Endothelial cell of umbilical vein (primary cell): ENCODE measurements at regions of chr12 and their contacts with region 1.

Region 1: DNA sequence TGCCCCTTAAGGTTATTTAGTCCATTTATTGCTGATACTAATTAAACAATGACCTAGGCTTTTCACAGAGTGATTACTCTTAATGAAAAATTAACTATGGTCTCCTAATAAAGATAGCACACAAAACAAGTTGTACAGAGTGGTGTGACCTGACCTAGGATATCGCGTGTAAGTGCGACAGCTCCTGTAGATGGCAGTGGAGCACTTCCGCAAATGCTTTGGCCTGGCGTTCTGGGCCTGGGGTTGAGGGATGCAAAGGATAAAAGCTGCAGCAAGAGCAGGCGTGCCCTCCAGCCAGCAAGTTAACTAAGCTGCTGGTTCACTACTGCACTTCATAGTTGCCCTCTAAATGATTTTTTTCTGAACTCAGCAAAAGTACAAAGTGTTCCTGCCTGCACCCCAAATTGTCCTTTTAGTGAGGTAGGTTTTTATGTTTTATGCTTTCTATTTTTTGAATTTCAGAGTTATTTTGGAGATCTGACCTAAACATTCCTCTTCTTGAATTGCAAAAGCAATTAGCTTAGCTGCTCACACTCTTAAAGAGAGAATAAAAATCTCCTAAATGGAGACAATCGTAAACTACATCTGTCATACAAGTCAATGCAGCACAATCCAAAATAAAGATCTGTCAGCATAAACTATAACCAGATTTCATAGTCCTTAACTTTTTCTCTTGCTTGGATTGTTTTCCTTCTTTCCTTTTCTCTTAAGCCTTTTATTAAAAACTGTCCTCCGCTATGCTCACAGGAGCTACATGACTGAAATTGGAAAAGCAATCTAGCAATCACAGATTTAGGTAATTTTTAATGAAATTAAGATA is 379.6 kb downstream of the LRIG3 start:
- DNase-seq: peak; percentile 89
- H3K4me3 ChIP-seq: no peak overlapping the region
- H3K27ac ChIP-seq: no peak overlapping the region
- H3K4me1 ChIP-seq: peaks cover 10% of the 10 kb centered on the region
- H3K27me3 ChIP-seq: no peaks in the 10 kb centered on the region
- CTCF ChIP-seq: peak; percentile 76 to 79
- POLR2A ChIP-seq: no peak

Region 2: DNA sequence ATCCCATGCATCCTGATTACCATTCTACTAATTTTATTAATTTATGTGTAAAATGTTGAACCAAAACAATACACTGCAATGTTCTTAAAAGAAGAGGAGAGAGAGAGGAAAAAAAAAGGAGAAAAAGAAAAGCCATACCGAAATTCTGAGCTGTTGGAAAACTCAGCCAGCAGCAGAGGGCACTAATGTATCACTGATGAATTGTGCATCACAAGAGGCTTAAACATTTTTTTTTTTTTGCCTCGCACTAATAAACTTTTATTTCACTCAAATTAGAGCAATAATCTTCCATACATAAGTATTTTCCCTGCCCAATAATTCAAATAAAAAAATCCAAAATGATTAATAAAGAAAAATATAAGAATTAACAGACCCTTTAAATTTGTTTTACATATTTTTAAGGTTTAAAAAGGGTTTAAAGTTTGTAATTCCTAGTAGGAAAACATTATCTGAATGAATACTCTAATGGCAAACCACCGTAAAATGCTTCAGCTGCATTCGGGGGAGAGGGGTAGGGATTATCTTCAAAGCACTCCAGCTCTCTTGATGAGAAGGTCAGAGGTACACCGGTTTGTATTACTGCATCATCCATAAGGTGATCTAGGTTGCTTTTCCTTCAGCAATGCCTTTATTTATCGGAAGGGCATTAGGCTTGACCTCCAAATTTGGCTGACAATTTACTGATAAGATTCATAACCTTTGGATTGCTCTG is 557.4 kb before region 1 on chr12:
- CTCF ChIA-PET with region 1: interaction called, 14 read pairs
- POLR2A ChIA-PET with region 1: no interaction called
- dilution Hi-C with region 1: no loop called
- intact Hi-C with region 1: loop called (anchors 1 kb)
- DNase-seq: peak; percentile 72
- H3K4me3 ChIP-seq: no peak overlapping the region
- H3K27ac ChIP-seq: no peak overlapping the region
- H3K4me1 ChIP-seq: no peaks in the 10 kb centered on the region
- H3K27me3 ChIP-seq: peaks cover 0 to 3% of the 10 kb centered on the region in 2 experiments
- CTCF ChIP-seq: peak; percentile 25 to 55
- POLR2A ChIP-seq: no peak

Region 3: GRCh38 chr12:58633479-58633878 is 92.8 kb after region 1 on chr12:
- CTCF ChIA-PET with region 1: interaction called, 10 read pairs
- POLR2A ChIA-PET with region 1: no interaction called
- dilution Hi-C with region 1: no loop called
- intact Hi-C with region 1: no loop called
- DNase-seq: peak; percentile 24
- H3K4me3 ChIP-seq: no peak overlapping the region
- H3K27ac ChIP-seq: no peak overlapping the region
- H3K4me1 ChIP-seq: no peaks in the 10 kb centered on the region
- H3K27me3 ChIP-seq: no peaks in the 10 kb centered on the region
- CTCF ChIP-seq: no peak
- POLR2A ChIP-seq: no peak

Region 4: GRCh38 chr12:58833853-58834252 is 293.2 kb after region 1 on chr12:
- CTCF ChIA-PET with region 1: interaction called, 13 read pairs
- POLR2A ChIA-PET with region 1: no interaction called
- dilution Hi-C with region 1: no loop called
- intact Hi-C with region 1: no loop called
- DNase-seq: no peak
- H3K4me3 ChIP-seq: no peak overlapping the region
- H3K27ac ChIP-seq: no peak overlapping the region
- H3K4me1 ChIP-seq: no peaks in the 10 kb centered on the region
- H3K27me3 ChIP-seq: no peaks in the 10 kb centered on the region
- CTCF ChIP-seq: no peak
- POLR2A ChIP-seq: no peak

Region 5: DNA sequence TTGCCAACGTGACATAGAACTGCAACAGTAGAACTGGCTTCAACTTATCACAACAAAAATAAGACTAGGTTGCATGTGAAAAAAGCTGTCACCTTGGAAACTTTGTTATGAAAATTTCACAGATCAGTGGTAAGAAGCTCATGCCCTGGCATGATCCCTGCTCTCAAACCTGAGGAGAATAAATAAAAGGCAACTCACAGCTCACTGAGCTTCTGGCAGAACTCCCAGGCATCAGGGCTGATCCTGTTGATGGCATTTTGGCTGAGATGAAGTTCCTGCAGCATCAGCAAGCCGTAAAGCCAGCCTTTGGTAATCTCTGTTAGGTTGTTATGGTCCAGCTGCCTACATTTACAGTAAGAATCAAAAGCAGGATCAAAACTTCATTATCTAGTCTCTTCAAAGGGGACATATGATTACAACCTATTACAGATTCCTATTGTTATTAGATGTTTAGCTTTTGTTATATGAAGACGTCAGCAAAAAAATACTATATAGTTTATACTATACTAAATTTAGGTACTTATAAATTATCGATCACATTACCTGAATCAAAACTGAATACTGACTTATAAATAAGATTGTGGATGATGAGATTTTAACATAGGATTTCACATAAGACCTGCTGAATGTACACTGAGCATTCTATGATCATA is 347.6 kb after region 1 on chr12:
- CTCF ChIA-PET with region 1: interaction called, 28 read pairs
- POLR2A ChIA-PET with region 1: no interaction called
- dilution Hi-C with region 1: no loop called
- intact Hi-C with region 1: no loop called
- DNase-seq: peak; percentile 39
- H3K4me3 ChIP-seq: no peak overlapping the region
- H3K27ac ChIP-seq: no peak overlapping the region
- H3K4me1 ChIP-seq: no peaks in the 10 kb centered on the region
- H3K27me3 ChIP-seq: no peaks in the 10 kb centered on the region
- CTCF ChIP-seq: no peak
- POLR2A ChIP-seq: no peak

Region 6: GRCh38 chr12:59113831-59114615 is 573.3 kb after region 1 on chr12:
- CTCF ChIA-PET with region 1: interaction called, 15 read pairs
- POLR2A ChIA-PET with region 1: no interaction called
- dilution Hi-C with region 1: no loop called
- intact Hi-C with region 1: no loop called
- DNase-seq: peak; percentile 92
- H3K4me3 ChIP-seq: no peak overlapping the region
- H3K27ac ChIP-seq: no peak overlapping the region
- H3K4me1 ChIP-seq: peaks cover 4% of the 10 kb centered on the region
- H3K27me3 ChIP-seq: no peaks in the 10 kb centered on the region
- CTCF ChIP-seq: peak; percentile 82 to 94
- POLR2A ChIP-seq: no peak

Region 7: GRCh38 chr12:59403259-59403932 is 862.7 kb after region 1 on chr12:
- CTCF ChIA-PET with region 1: no interaction called
- POLR2A ChIA-PET with region 1: no interaction called
- dilution Hi-C with region 1: no loop called
- intact Hi-C with region 1: loop called (anchors 5 kb)
- DNase-seq: peak; percentile 70
- H3K4me3 ChIP-seq: peak overlapping the region in 1 of 3 experiments; percentile 20
- H3K27ac ChIP-seq: no peak overlapping the region
- H3K4me1 ChIP-seq: peaks cover 6% of the 10 kb centered on the region
- H3K27me3 ChIP-seq: no peaks in the 10 kb centered on the region
- CTCF ChIP-seq: peak; percentile 74 to 79
- POLR2A ChIP-seq: no peak